ENCODE measurements at regions of chr11 and their contacts with region 1.

Region 1: GRCh38 chr11:133966921-133967598 is 10.3 kb upstream of the IGSF9B start:
- DNase-seq: no peak

Region 2: DNA sequence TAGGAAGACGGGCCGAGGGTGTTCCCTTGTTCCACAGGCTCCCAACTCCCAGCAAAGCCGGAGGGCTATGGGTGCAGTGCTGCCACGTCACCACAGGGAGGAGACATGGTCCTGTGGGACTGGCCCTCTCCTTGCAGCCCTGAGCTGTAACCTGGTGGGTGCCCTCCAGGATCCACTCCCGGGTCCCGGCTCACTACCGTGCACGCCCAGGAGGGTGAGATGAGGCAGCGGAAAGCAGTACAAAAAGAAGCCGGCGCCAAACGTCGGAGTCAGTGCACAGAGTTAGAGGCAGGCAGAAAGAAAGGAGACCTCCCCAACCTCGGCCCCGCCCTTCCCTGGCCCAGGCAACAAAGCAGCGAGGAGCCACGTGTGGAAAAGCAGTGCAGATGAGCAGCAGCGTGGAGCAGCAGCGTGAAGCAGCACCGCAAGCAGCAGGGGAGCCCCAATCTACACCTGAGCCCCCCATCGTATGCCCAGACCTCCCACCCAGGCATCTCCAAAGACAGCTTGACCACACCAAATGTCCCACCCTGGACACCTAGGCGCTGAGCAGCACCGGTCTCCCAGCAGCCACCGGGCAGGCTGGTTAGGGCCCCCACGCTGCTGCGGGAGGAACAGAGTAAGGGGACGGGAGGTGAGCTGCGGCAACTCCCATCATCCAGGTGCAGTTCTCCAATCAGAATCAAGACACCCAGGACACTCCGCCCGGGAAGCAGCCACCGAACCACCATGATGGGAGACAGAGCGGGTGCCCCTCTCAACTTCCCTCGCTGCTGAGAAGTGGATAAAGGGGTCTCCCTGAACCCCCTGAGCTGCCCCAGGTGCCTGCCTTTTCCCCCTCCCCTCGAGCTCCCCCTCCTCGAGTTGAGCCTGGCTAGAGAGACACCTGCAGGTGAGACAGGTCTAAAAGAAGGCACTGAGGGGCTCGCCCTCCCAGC is 39.1 kb before region 1 on chr11:
- intact Hi-C with region 1: loop called (anchors 5 kb)
- DNase-seq: peak; percentile 85

Region 3: GRCh38 chr11:134040386-134041302 is 73.6 kb after region 1 on chr11:
- intact Hi-C with region 1: loop called (anchors 5 kb)
- DNase-seq: no peak

Region 4: GRCh38 chr11:134062265-134063123 is 95.4 kb after region 1 on chr11:
- intact Hi-C with region 1: no loop called
- DNase-seq: no peak

Region 5: DNA sequence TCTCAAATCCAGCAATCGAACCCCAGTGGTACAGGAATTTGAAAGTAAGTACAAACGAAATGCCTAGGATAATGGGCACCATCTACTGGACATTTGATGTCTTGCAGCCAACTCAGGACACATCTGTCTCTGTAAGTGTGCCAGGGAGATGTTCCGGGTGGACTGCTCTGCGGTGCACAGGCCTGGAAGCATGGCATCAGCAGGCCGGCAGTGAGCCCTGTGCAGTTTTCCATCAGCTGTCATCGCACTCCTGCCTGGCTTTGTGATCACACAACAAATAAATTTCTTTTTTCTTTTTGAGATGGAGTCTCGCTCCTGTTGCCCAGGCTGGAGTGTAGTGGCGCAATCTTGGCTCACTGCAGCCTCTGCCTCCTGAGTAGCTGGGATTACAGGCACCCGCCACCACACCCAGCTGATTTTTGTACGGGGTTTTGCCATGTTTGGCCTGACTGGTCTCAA is 172.8 kb after region 1 on chr11:
- intact Hi-C with region 1: loop called (anchors 5 kb)
- DNase-seq: no peak

Measured in cardiac septum (tissue), 1 donor.